Right cardiac atrium (tissue), 5 donors: ENCODE measurements at regions of chr1 and their contacts with region 1.

Region 1: DNA sequence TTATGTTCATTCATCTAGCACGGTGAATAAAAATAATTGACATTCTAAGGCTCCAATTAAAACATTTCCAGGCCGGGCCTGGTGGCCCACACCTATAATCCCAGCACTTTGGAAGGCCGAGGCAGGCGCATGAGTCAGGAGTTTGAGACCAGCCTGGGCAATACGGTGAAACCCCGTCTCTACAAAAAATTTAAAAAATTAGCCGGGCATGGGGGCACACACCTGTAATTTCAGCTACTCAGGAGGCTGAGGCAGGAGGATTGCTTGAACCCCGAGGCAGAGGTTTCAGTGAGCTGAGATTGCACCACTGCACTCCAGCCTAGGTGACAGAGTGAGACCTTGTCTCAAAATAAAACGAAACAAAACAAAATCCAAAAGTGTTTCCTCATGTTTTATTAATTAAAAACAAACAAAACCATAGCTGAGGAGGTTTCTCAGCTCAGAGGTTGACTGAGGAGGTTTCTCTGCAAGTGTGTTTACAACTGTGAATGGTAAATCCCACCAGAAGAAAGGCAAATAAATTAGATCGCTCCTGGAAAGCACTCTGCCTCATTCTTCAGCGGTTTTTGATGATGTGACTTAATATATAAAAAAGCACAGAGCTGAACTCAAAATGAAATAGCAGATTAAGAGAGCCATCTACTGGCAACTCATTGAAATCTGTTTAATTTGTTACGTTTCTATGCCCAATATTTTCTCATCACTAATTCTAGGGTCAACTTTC is 37.7 kb upstream of the ATG4C start:
- DNase-seq: no peak
- ATAC-seq: peak in 1 of 2 donors; percentile 38
- H3K4me3 ChIP-seq: no peak overlapping the region
- H3K27ac ChIP-seq: no peak overlapping the region
- H3K4me1 ChIP-seq: no peaks in the 10 kb centered on the region
- H3K27me3 ChIP-seq: no peaks in the 10 kb centered on the region

Region 2: DNA sequence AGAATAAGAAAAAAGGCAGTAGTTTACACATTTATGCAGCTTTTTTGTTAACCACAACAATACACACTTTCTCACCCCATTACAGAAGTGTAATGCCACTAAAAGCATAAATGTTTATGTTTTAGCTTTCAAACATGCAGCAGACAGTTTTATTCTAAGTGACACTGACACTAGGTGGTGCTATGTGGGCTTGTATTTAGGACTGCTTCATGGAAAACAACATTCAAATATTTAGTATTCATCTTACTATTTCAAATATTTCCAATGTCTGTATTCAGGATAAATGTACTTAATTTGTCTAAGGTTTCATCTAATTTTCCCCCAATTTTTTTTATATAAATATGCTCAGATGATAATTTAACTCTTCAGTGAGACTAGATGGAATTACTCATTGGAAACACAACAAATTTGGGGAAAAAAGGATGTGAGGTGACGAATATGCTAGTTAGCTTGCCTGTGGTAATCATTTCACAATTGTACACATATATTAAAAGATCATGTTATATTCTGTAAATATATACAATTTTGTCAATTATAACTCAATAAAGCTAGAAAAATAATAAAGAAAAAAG is 238.0 kb before region 1 on chr1:
- intact Hi-C with region 1: loop called in 3 of 4 experiments (anchors 5 kb)
- DNase-seq: no peak
- ATAC-seq: no peak
- H3K4me3 ChIP-seq: no peak overlapping the region
- H3K27ac ChIP-seq: no peak overlapping the region
- H3K4me1 ChIP-seq: no peaks in the 10 kb centered on the region
- H3K27me3 ChIP-seq: no peaks in the 10 kb centered on the region

Region 3: DNA sequence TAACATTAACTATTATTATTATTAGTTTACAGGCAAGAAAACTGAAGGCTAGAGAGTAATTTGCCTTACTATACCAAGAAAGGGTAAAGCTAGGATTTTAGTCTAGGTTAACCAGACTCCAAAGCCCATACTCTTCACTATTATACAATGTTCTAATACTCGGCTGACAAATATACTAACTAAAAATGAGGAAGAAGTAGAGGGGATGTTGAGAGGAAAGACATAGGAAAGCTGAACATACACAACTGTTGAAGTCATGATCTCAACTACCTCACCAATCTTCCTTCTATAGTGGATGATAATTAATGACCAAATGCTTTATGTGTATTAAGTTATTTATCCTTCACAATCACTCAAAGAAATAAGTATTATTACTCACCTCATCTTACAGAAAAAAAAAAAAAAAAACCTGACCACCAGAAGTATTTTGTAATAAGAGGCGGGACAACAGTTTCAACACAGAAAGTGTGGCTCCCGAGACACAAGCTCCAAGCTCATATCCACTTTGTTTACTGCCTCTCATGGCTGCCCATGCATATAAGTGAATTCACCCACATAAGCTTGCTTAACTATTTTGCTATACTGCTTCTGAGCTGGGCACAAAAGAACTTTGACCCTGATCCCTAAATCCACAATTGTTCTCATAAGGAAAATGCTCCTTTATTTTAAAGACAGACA is 231.4 kb before region 1 on chr1:
- intact Hi-C with region 1: loop called in 1 of 4 experiments (anchors 5 kb)
- DNase-seq: no peak
- ATAC-seq: no peak
- H3K4me3 ChIP-seq: no peak overlapping the region
- H3K27ac ChIP-seq: no peak overlapping the region
- H3K4me1 ChIP-seq: no peaks in the 10 kb centered on the region
- H3K27me3 ChIP-seq: no peaks in the 10 kb centered on the region

Region 4: DNA sequence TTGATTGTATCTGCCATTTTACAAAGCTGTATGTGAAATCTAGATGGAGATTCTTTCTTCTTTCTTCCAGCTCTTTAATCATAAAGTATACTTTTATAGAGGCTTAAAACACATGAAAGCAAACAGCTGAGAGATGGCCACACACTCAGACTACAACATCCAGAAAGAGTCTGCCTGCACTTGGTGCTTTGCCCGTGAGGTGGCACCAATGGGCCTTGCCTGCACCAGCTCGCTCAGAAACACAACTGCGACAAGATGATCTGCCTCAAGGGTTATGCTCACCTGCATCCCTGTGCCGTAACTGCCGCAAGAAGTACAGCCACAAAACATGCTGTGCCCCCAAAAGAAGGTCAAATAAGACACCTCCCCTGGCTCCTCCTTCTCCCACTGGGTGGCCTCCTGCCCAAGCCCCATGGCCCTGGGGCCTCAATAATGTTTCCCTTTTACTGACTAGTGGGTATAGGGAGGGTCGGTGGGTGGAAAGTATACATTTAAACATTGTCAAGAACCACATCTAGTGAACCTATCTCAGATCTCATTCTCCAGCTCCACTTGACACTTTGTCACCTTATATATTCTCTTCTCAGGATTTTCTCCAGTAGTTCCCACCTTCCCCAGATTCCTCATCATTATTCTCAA is 215.6 kb before region 1 on chr1:
- intact Hi-C with region 1: loop called in 1 of 4 experiments (anchors 10 kb)
- DNase-seq: peak in 2 of 3 donors; percentile 56 to 68
- ATAC-seq: peak in 1 of 2 donors; percentile 55
- H3K4me3 ChIP-seq: no peak overlapping the region
- H3K27ac ChIP-seq: no peak overlapping the region
- H3K4me1 ChIP-seq: no peaks in the 10 kb centered on the region
- H3K27me3 ChIP-seq: no peaks in the 10 kb centered on the region

Region 5: DNA sequence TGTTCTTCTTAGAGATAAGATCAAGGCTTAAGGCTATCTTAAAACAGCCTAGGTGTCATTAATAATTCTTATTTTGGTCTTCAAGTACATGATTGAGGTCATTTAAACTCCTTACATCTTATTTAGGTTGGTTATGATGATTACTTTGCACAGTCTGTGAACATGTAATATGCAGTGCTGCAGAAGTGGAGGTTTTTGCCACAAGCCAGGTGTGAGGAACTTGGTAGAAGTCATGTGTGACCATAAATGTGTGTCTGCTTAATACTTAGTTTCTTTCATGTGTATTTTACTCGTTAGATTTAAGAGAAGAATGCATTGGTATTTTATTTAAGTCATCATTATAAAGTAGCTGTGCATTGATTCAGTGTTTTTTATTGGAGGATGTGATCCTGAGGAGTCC is 47.8 kb after region 1 on chr1:
- intact Hi-C with region 1: no loop called
- DNase-seq: no peak
- ATAC-seq: no peak
- H3K4me3 ChIP-seq: no peak overlapping the region
- H3K27ac ChIP-seq: no peak overlapping the region
- H3K4me1 ChIP-seq: no peaks in the 10 kb centered on the region
- H3K27me3 ChIP-seq: no peaks in the 10 kb centered on the region

Region 6: GRCh38 chr1:62912028-62912638 is 165.9 kb after region 1 on chr1:
- intact Hi-C with region 1: no loop called
- DNase-seq: no peak
- ATAC-seq: no peak
- H3K4me3 ChIP-seq: no peak overlapping the region
- H3K27ac ChIP-seq: no peak overlapping the region
- H3K4me1 ChIP-seq: no peaks in the 10 kb centered on the region
- H3K27me3 ChIP-seq: no peaks in the 10 kb centered on the region